ENCODE measurements at regions of chr10 and their contacts with region 1.

Region 1: DNA sequence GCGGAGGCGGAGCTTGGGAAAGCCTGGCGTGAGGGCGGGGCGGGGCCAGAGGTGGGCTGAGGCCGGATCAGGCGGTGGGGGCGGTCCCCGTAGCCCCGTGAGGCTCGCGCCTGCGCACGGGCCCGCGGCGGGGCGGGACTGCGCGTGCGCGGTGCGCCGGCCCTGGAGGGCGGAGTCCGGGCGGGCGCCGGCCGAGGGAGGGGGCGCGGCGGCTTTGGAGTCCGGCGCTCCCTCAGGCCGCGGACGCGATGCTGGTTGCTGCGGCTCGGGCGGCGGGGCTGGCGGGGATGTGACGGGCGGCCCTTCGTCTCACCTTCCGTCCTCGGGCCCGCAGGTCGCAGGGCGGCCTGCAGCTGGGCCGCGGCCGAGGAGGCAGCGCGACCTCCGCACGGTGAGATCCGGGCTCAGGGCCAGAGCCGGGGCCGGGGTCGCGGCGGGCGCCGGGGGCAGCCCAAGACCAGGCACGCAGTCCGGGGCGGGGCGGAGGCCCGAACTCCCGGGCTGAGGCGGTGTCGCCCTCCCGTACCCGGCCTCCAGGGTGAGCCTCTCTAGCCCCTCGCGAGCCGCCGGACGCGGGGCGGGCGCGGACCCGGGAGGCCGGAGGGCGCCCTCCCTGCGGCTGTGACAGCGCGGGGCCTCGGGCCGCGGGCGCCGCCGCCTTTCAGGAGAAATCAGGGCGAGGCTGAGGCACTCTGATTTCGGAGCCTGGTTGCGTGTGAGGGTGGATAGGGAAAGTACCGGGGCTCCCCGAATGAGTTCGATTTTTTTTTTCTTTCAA is at the start of gene CCSER2:
- DNase-seq: peak; percentile 99
- ATAC-seq: peak; percentile 97 to 99 (median 98)
- H3K4me3 ChIP-seq: peak within 1 kb of the TSS; percentile 94
- H3K27ac ChIP-seq: peak within 1 kb of the TSS; percentile 95
- H3K4me1 ChIP-seq: peaks cover 25% of the 10 kb centered on the region
- H3K27me3 ChIP-seq: no peaks in the 10 kb centered on the region
- CTCF ChIP-seq: no peak
- total RNA-seq, gene CCSER2: 65.7 to 122 (median 114) TPM

Region 2: GRCh38 chr10:84139126-84140035 is 189.2 kb before region 1 on chr10 and contains the start of gene GHITM:
- intact Hi-C with region 1: loop called in 1 of 2 experiments (anchors 5 kb)
- DNase-seq: peak; percentile 99 to 100
- ATAC-seq: peak; percentile 97 to 98 (median 98)
- H3K4me3 ChIP-seq: peak within 1 kb of the TSS; percentile 97
- H3K27ac ChIP-seq: peak within 1 kb of the TSS; percentile 99
- H3K4me1 ChIP-seq: peaks cover 25% of the 10 kb centered on the region
- H3K27me3 ChIP-seq: no peaks in the 10 kb centered on the region
- CTCF ChIP-seq: peak; percentile 40
- total RNA-seq, gene GHITM: 230 to 353 (median 263) TPM

Region 3: DNA sequence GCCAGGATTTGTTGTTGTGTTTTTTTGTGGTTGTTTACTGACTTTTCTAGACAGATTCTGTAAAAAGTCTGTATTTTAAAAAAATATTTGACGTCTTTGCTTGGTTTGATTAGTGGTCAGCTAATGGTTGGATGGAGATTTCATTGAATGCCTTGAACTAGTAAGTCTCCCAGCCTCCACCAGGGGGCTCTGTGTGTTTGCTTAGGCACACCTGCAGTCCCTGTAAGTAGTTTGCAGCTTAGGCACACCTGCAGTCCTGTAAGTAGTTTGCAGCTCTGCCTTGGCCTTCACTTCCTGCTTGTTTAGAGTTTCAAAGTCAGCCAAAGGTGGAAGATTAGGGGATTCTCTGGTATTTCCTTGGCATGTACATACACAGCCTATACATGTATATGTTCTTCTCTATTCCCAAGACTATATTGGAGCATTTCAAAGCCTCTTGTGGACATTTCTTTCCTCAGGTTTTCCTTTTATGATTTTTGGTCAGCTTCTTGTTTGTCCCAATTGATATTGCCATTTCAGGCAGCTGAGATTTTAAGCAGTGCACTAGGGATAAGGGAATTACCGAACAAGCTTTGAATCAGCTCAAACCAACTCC is 101.4 kb after region 1 on chr10:
- intact Hi-C with region 1: loop called in 1 of 2 experiments (anchors 5 kb)
- DNase-seq: peak; percentile 34 to 59
- ATAC-seq: peak; percentile 34 to 79 (median 74)
- H3K4me3 ChIP-seq: no peak overlapping the region
- H3K27ac ChIP-seq: no peak overlapping the region
- H3K4me1 ChIP-seq: peaks cover 77% of the 10 kb centered on the region
- H3K27me3 ChIP-seq: no peaks in the 10 kb centered on the region
- CTCF ChIP-seq: peak; percentile 64

Measured in psoas muscle (tissue), 8 donors.